AG04450 (cell line): ENCODE measurements at regions of chr10 and their contacts with region 1.

Region 1: DNA sequence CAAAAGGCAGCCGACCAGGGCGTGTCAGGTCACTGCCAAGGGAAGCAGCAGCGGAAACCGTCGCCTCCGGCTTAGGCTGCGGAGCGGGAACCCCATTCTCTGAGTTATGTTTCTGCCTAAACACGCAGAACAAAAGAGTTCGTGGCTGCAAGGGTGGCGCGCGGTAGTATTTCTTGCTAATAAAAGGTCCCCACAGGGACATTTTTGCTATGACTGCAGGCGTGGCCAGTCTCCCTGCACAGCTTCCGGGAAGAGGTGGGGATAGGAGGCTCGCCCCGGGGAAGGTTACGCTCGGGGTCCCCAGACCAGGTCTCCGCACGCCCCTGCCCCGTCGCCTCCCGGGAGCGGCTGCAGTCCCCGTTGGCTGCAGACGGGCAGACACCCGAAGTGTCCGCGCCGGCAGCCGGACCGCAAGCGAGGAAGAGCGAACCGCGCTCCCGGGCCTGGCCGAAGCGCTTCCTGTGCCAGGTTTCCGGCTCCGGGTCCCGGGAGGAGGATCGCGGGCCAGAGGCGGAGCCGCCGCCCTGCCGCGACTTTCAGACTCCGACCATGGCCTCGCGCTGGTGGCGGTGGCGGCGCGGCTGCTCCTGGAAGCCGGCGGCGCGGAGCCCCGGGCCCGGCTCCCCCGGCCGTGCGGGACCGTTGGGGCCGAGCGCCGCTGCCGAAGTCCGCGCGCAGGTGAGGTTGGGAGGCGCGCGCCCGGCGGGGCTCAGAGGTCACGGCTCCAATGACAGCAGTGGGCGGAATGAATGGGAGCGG is at the start of gene PDSS1:
- DNase-seq: no peak
- H3K4me3 ChIP-seq: peak within 1 kb of the TSS; percentile 86
- H3K27ac ChIP-seq: peak within 1 kb of the TSS; percentile 68
- H3K27me3 ChIP-seq: no peaks in the 10 kb centered on the region
- CTCF ChIP-seq: no peak
- polyA plus RNA-seq, gene PDSS1: 8.9 and 10.4 TPM in 2 replicates

Region 2: DNA sequence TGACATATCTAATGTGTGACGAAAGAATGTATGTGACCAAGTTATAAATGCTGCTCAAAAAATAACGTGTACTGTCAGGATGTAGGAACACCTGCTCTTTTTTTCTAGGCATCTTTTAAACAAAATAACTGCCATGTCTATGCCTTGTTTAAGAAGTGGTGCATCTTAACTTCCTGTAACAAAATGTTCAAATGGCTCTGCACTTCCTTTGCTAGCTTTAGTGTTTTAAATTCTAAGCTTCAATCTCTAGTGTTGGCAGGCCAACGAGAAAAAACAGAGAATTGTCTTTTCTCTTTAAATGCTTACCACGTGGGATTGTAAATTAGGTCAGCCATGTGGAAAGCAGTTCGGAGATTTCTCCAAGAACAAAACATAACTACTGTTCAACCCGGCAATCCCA is 14.4 kb before region 1 on chr10:
- CTCF ChIA-PET with region 1: interaction called, 14 read pairs
- POLR2A ChIA-PET with region 1: interaction called, 3 read pairs
- DNase-seq: no peak
- H3K4me3 ChIP-seq: no peak overlapping the region
- H3K27ac ChIP-seq: no peak overlapping the region
- H3K27me3 ChIP-seq: no peaks in the 10 kb centered on the region
- CTCF ChIP-seq: no peak